Activated T-helper 1 cell treated with anti-CD3 and anti-CD28 coated beads, Interleukin-12 subunit alpha, Interleukin-12 subunit beta, Interleukin-2, Interleukin-4 antibody, amounts not matched to agents 30 ng/mL and 10 ng/mL and 1 ng/mL, durations not matched to agents 14 hours and 24 hours and 36 hours (primary cell): ENCODE measurements at regions of chr3 and their contacts with region 1.

Region 1: GRCh38 chr3:156674046-156674910 is at the start of gene TIPARP:
- DNase-seq: peak; percentile 100
- H3K4me3 Mint-ChIP-seq: peak within 1 kb of the TSS; percentile 95
- H3K27ac Mint-ChIP-seq: peak within 1 kb of the TSS; percentile 98
- H3K4me1 Mint-ChIP-seq: peaks cover 49% of the 10 kb centered on the region
- H3K27me3 Mint-ChIP-seq: no peaks in the 10 kb centered on the region
- total RNA-seq, gene TIPARP: 20.8 and 21.9 TPM in 2 replicates

Region 2: DNA sequence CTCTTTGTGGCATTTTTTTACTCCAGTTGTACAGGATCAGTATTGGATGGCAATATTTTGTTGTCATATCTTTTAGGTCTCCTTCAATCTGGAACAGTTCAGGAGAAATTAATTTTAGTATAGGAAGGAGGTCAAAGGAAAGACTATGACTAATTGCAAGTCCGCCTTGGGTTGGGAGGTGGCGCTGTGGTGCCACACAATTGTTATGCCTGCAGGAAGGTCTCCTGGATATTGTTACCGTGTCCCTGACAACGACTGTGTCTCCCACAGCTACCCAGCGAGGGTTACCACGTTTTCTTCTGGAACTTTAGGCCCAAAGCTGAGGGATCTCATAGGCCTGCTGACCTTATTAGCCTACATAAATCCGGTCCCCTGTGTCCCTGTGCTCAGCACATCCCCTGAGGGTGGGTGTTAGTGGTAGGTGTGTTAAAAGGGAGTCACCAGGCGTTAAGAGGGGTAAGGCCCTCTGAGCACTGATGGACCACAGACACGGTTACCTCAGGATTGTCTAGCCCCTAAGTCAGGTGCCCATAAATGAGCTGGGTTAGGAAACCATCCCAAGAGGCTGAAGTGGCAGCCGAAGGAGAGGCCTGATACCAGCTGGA is 522.4 kb before region 1 on chr3:
- intact Hi-C with region 1: loop called (anchors 5 kb)
- DNase-seq: peak; percentile 11
- H3K4me3 Mint-ChIP-seq: no peak overlapping the region
- H3K27ac Mint-ChIP-seq: no peak overlapping the region
- H3K4me1 Mint-ChIP-seq: peaks cover 7% of the 10 kb centered on the region
- H3K27me3 Mint-ChIP-seq: peaks cover 7% of the 10 kb centered on the region

Region 3: DNA sequence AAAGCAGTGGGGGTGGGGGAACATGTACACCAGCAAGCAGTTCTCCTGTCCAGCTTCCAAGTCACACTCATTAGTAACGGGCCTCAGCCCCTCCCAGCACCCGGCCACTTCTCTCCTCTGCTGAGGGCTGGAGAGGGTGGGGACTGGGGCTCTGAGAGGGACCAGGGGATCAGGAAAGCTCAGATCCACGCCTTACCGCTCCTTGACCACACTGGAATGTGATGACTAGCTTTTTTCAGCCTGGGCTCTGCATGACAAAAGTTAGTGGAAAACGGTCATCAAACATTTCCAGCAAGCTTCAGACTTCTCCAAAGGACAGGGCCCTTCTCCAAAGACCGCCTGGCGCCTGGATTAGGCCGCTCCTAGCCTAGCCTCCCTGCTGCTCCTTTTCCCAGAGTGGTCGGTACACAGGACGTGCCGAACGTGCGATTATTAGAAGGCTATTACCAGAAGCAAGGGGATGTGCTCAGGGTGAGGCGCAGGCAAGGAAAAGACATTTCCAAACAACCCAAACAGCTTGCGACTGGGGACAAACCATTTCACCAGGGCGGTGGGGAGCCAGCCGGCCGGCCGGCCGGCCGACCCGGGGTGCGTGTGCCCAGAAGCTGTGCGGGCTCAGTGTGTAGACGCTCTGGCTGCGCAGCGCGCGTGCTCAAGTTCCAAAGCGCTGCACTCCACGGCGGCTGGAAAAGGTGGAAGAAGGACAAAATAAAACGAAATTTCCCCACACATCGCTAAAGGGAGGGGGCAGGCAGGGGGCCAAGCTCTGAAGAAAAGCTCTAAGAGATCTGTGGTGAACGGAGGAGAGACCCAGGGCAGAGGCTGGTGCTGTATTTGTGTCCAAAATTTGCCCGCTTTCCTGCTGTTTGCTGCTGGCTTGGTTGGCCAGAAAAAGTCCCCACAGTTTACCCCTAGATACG is 68.3 kb before region 1 on chr3:
- intact Hi-C with region 1: loop called (anchors 2 kb)
- DNase-seq: no peak
- H3K4me3 Mint-ChIP-seq: peak overlapping the region; percentile 82
- H3K27ac Mint-ChIP-seq: peak overlapping the region; percentile 29
- H3K4me1 Mint-ChIP-seq: peaks cover 46% of the 10 kb centered on the region
- H3K27me3 Mint-ChIP-seq: peaks cover 11% of the 10 kb centered on the region

Region 4: DNA sequence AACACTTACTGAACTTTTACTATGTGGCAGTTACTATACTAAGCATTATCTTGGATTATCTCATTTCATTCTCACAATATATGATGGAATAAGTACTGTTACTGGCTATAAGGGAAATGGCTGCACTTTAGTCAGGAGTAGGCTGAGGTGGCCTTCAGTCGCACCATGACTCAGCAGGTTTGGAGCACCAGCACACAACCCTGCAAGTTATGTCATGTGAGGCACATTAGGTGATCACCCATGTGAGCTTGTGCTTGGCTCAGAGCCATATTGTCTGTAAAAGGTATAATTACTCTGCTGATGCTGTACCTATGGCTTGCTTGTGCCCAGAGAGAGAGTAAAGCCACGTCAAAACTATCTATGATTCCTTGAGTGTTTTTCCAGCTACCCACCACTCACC is 54.0 kb before region 1 on chr3:
- intact Hi-C with region 1: no loop called
- DNase-seq: no peak
- H3K4me3 Mint-ChIP-seq: no peak overlapping the region
- H3K27ac Mint-ChIP-seq: no peak overlapping the region
- H3K4me1 Mint-ChIP-seq: peaks cover 20% of the 10 kb centered on the region
- H3K27me3 Mint-ChIP-seq: peaks cover 2% of the 10 kb centered on the region

Region 5: GRCh38 chr3:156691920-156692319 is 17.6 kb after region 1 on chr3:
- intact Hi-C with region 1: loop called (anchors 2 kb)
- DNase-seq: no peak
- H3K4me3 Mint-ChIP-seq: no peak overlapping the region
- H3K27ac Mint-ChIP-seq: no peak overlapping the region
- H3K4me1 Mint-ChIP-seq: peaks cover 69% of the 10 kb centered on the region
- H3K27me3 Mint-ChIP-seq: no peaks in the 10 kb centered on the region

Region 6: DNA sequence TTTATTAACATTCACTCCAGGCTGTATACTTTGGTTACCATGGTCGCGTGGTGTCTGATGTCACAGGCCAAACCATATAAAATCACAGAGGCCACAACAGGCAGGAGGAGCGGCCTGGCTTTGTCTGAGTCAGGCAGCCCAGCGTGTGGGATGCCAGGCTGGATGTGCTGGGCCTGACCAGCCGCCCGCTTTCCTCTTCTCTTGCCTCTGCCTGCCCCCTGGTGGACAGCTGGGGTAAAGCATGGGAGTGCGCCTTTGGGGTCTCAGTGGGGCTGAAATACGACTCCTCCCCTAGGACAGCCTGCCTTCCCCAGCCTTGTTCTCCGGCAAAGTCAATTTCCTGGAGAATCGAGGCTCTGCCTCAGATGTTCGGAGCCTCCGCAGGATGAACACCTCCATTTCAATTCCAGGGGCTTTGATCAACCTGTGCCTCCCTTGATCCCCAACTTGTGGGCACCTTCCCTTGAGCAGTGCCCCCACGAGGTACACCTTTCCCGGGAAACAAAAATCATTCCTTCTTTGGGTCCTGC is 407.5 kb after region 1 on chr3:
- intact Hi-C with region 1: loop called (anchors 1 kb)
- DNase-seq: peak; percentile 73
- H3K4me3 Mint-ChIP-seq: no peak overlapping the region
- H3K27ac Mint-ChIP-seq: no peak overlapping the region
- H3K4me1 Mint-ChIP-seq: peaks cover 46% of the 10 kb centered on the region
- H3K27me3 Mint-ChIP-seq: no peaks in the 10 kb centered on the region

Region 7: DNA sequence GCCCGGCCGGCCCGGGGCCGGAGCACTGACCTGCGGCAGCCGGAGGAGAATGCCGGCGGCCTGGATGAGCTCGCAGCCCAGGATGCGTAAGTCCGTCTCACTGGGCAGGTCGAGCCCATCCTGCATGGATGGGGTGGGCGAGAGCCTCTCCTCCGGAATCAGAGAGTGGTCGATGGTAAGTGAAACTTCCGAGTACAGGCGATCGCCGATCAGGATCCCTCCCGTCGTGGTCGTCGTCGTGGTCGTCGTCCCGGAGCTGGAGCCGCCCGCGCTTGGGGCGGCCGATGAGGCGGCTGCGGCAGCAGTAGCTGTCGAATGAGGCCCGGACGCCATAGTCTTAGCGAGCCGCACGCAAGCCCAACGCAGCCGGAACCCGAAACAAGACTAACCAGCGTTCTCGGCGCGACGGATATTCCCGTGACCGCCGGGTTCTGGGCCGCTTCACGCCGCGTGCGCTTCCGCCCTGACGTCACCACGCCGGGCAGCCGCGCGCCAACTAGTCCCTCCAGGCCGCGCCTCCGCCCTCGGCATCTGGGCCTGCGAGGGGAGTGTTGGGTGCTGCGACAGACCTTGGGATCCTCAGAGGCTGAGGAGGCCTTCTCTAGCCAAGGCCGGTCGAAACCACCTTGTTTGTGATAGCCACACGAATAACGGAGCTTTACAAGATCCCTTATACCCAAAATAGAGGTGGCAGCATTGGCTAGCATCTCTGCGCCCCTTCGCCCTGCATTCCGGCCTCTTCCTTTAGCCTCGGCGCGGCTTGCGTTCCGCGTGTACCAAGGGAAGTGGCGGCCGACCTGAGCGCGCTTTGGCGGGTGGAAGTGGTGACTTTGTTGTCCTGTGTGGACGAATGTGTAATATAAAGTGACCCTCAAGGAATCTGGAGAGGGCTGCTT is 485.7 kb after region 1 on chr3 and contains the start of gene CCNL1:
- intact Hi-C with region 1: loop called (anchors 1 kb)
- DNase-seq: peak; percentile 95
- H3K4me3 Mint-ChIP-seq: peak within 1 kb of the TSS; percentile 93
- H3K27ac Mint-ChIP-seq: peak within 1 kb of the TSS; percentile 94
- H3K4me1 Mint-ChIP-seq: peaks cover 64% of the 10 kb centered on the region
- H3K27me3 Mint-ChIP-seq: no peaks in the 10 kb centered on the region
- total RNA-seq, gene CCNL1: 167 and 204 TPM in 2 replicates

Region 8: GRCh38 chr3:157931517-157931916 is 1257.2 kb after region 1 on chr3:
- intact Hi-C with region 1: no loop called
- DNase-seq: no peak
- H3K4me3 Mint-ChIP-seq: no peak overlapping the region
- H3K27ac Mint-ChIP-seq: no peak overlapping the region
- H3K4me1 Mint-ChIP-seq: no peaks in the 10 kb centered on the region
- H3K27me3 Mint-ChIP-seq: no peaks in the 10 kb centered on the region